ENCODE measurements at regions of chr19 and their contacts with region 1.

Region 1: GRCh38 chr19:51660975-51661600 is 14.5 kb upstream of the SIGLEC14 start:
- DNase-seq: peak; percentile 75 to 79
- H3K4me3 ChIP-seq: no peak overlapping the region
- H3K4me3 Mint-ChIP-seq: no peak overlapping the region
- H3K27ac Mint-ChIP-seq: no peak overlapping the region
- H3K4me1 ChIP-seq: no peaks in the 10 kb centered on the region
- H3K4me1 Mint-ChIP-seq: no peaks in the 10 kb centered on the region
- H3K27me3 ChIP-seq: no peaks in the 10 kb centered on the region
- H3K27me3 Mint-ChIP-seq: peaks cover 7% of the 10 kb centered on the region
- CTCF ChIP-seq: peak; percentile 58 to 73

Region 2: DNA sequence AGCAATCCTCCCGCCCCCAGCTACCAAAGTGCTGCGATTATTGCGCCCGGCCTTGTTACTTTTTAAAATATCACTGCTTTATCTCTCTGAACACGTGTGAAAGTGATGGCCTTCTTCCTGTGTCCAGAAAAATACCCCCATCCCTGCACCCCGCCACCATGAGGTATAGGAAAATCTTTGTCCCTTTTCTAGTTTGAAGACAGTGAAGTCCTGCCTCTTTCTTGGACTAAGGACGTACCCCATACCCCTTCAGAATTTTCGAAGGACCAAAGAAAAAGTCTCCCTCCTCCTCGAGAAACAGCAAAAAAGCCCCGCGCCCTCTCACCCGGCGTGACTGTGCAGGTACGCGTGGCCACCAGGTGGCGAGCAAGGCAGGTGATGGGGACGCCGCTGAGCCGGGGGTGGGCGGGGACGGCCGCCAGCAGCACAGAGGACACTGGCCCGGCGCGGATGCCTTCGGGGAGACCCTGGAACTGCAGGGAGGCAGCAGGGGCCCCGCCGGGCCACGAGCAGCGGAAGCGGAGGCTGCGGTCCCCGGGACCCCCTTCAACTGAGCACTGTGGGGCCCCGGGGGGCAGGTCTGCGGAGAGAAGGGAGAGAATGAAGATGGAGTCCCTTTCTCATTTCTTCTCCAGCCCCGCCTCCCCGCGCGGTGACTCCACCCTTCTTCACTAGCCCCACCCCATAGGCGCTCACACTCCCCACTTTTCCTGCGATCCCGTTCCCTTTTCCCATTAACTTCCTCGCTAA is 322.4 kb before region 1 on chr19:
- CTCF ChIA-PET with region 1: interaction called, 7 read pairs
- POLR2A ChIA-PET with region 1: no interaction called
- intact Hi-C with region 1: loop called (anchors 2 kb)
- DNase-seq: peak; percentile 89 to 92
- H3K4me3 ChIP-seq: peak overlapping the region; percentile 78
- H3K4me3 Mint-ChIP-seq: peak overlapping the region; percentile 86
- H3K27ac Mint-ChIP-seq: peak overlapping the region; percentile 90
- H3K4me1 ChIP-seq: peaks cover 26% of the 10 kb centered on the region
- H3K4me1 Mint-ChIP-seq: peaks cover 25% of the 10 kb centered on the region
- H3K27me3 ChIP-seq: no peaks in the 10 kb centered on the region
- H3K27me3 Mint-ChIP-seq: no peaks in the 10 kb centered on the region
- CTCF ChIP-seq: peak; percentile 92 to 94

Region 3: GRCh38 chr19:51422053-51422448 is 239.0 kb before region 1 on chr19:
- CTCF ChIA-PET with region 1: interaction called, 21 read pairs
- POLR2A ChIA-PET with region 1: no interaction called
- intact Hi-C with region 1: loop called (anchors 1 kb)
- DNase-seq: peak; percentile 87 to 94
- H3K4me3 ChIP-seq: no peak overlapping the region
- H3K4me3 Mint-ChIP-seq: no peak overlapping the region
- H3K27ac Mint-ChIP-seq: no peak overlapping the region
- H3K4me1 ChIP-seq: no peaks in the 10 kb centered on the region
- H3K4me1 Mint-ChIP-seq: no peaks in the 10 kb centered on the region
- H3K27me3 ChIP-seq: no peaks in the 10 kb centered on the region
- H3K27me3 Mint-ChIP-seq: peaks cover 3% of the 10 kb centered on the region
- CTCF ChIP-seq: peak; percentile 98 to 99

Region 4: GRCh38 chr19:51473009-51473707 is 187.9 kb before region 1 on chr19:
- CTCF ChIA-PET with region 1: interaction called, 19 read pairs
- POLR2A ChIA-PET with region 1: no interaction called
- intact Hi-C with region 1: loop called (anchors 1 kb)
- DNase-seq: peak; percentile 83 to 86
- H3K4me3 ChIP-seq: no peak overlapping the region
- H3K4me3 Mint-ChIP-seq: no peak overlapping the region
- H3K27ac Mint-ChIP-seq: no peak overlapping the region
- H3K4me1 ChIP-seq: peaks cover 29% of the 10 kb centered on the region
- H3K4me1 Mint-ChIP-seq: peaks cover 24% of the 10 kb centered on the region
- H3K27me3 ChIP-seq: no peaks in the 10 kb centered on the region
- H3K27me3 Mint-ChIP-seq: no peaks in the 10 kb centered on the region
- CTCF ChIP-seq: peak; percentile 81 to 88

Region 5: DNA sequence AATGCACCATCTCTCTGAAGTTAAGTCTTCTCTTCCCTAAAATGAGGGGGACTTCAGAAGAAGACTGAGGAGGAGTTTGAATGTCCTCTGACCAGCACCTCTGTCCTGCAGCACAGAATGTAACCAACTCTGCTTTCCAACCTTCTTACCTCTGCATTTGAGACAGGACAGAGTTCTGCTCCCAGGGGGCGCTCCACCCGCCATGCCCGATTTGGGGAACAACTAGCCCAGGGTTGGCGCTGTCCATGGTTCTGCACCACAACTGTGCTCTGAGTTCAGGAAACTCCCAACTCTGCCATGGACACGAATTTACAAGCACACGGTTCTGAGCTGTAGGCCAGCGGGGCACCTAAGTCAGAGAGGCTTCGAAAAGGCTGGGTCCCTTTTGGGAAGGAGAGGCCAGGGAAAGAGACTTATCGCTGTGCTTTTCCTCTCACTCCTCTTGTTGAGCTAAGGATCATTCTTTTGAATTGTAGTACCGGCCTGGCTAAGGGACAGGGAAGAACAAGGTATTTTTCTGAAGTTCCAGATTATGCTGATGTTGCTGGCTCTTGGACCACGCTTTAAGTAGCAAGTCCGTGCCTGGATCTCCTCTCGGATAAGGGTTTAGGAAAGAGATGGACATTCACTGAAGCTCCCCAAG is 53.0 kb before region 1 on chr19:
- CTCF ChIA-PET with region 1: interaction called, 11 read pairs
- POLR2A ChIA-PET with region 1: no interaction called
- intact Hi-C with region 1: loop called (anchors 5 kb)
- DNase-seq: peak; percentile 84
- H3K4me3 ChIP-seq: no peak overlapping the region
- H3K4me3 Mint-ChIP-seq: no peak overlapping the region
- H3K27ac Mint-ChIP-seq: no peak overlapping the region
- H3K4me1 ChIP-seq: no peaks in the 10 kb centered on the region
- H3K4me1 Mint-ChIP-seq: no peaks in the 10 kb centered on the region
- H3K27me3 ChIP-seq: no peaks in the 10 kb centered on the region
- H3K27me3 Mint-ChIP-seq: peaks cover 15% of the 10 kb centered on the region
- CTCF ChIP-seq: peak; percentile 75 to 78

Region 6: GRCh38 chr19:51703575-51704515 is 42.8 kb after region 1 on chr19:
- CTCF ChIA-PET with region 1: interaction called, 10 read pairs
- POLR2A ChIA-PET with region 1: no interaction called
- intact Hi-C with region 1: no loop called
- DNase-seq: peak; percentile 96
- H3K4me3 ChIP-seq: peak overlapping the region; percentile 54
- H3K4me3 Mint-ChIP-seq: peak overlapping the region; percentile 85
- H3K27ac Mint-ChIP-seq: peak overlapping the region; percentile 90
- H3K4me1 ChIP-seq: peaks cover 12% of the 10 kb centered on the region; the same call in 1 of the 2 replicates
- H3K4me1 Mint-ChIP-seq: peaks cover 12% of the 10 kb centered on the region
- H3K27me3 ChIP-seq: no peaks in the 10 kb centered on the region
- H3K27me3 Mint-ChIP-seq: no peaks in the 10 kb centered on the region
- CTCF ChIP-seq: peak; percentile 45 to 54

Measured in Caco-2 (cell line).